ENCODE measurements at regions of chr6 and their contacts with region 1.

Region 1: GRCh38 chr6:15441215-15441868 is 195.5 kb downstream of the JARID2 start:
- DNase-seq: peak in 2 of 10 donors; percentile 30 to 43

Region 2: DNA sequence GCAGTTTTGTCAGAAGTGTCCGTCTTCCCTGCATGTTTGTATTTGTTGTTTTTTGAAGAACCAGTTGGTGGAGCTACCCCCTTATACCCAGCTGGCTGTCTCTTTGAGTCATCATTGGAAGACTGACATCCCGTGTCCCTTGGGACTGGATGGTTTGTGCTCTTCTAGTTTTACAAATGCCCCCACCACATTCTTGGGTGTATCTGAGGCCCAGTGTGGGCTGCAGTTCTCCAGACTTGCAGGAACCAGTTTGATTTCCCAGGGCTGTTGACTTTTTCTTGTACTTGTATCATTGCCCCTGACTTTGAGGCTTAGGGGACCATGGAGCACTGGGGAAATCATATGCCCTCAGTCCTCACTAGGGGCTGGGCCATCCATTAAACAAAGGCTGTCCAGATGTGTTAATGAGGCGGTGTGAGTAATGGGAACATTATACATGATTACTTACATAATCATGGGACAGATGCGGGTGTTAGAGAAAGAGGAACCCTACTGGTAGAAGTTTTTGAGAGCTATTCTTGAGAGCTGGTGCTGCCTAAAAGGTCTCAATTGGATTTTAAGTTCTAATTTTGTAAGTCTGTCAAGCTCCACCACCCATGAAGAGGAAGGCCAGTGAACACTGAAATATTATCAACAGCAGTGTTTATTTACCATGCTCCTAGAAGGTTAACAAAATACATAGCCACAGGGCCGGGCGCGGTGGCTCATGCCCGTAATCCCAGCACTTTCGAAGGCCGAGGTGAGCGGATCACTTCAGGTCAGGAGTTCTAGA is 187.1 kb before region 1 on chr6:
- intact Hi-C with region 1: loop called (anchors 5 kb)
- DNase-seq: peak in 1 of 10 donors; percentile 18

Region 3: DNA sequence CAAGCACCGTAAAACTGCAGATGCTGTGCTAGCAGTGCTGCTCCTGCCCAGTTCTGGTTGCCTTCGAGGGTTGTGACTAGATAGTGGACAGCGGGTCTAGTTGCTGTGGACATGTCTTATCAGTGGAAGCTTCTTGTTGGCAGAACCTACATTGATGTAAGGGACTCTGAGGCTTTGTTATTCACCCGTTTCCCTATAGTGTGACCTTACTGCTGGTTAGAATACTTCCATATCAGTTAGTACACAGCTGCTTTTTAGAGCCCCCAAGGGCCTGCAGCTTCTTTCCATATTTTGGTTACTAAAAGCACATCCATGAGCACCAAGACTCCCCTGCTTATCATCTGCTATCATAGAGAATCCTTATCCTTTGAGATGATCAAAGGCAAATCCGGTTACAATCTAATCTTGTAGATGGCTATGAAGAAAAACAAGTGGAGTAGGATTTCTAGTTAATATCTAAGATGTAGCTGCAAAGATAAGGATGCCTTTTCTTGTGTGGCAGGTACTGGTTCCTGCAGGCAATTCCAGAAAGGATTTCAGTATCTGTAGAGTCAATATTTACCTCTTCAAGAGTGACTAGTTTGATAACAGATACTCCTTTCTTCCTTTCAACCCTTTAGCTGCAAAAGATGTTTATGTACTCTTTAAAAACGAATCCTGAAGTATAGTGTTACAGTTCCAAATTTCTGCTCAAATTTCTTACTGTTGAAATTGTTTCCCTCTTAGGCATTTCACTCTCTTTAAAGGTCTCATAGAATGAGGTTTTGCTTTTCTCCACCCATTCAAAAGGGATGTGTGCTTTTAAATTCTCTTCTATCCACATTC is 31.8 kb before region 1 on chr6:
- intact Hi-C with region 1: loop called (anchors 5 kb)
- DNase-seq: peak in 1 of 10 donors; percentile 22

Region 4: DNA sequence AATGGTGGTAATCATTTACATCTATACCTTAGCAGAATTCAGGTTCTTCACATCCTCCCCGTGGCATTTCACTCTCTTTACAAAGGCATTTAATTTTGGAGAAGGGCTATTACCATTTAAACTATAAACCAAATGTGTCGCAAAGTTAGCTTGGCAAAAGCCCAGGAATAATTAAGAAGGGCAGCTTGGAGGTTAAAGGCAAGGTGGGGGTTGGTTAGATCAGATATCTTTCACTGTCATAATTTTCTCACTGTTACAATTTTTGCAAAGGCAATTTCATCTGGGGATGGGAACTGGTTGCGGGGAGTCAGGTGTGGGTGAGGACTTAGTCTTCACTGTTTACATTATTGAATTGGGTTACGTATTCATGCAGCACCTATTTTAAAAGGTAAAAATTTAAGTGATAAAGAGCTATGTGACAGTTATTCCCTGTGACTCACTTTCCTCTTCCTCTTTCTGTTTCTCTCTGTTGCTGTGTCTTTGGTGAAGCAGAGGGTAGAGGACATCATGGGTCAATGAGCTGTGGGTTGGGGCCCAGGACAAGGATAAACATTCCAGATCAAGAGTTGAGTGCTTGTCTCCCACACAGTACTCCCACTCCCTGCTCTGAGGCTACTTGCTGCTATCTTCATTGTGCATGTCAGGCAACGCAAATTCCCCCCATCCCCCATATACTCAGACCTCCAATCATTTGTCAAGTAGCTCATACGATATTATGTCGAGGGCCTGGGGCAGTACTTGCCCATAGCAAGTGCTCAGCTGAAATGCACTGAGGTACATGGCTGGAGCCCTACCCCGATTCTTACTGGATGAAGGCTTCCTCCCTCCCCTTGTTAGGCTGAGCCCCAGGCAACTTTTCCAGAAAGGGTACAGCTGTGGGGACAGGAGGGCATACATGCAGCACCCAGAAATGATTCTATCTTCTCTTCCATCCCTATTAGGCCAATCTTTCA is 464.4 kb after region 1 on chr6:
- intact Hi-C with region 1: no loop called
- DNase-seq: no peak

Measured in posterior cingulate gyrus (tissue), 11 donors.